ENCODE measurements at regions of chr11 and their contacts with region 1.

Region 1: GRCh38 chr11:34926101-34926830 is 9.8 kb downstream of the PDHX start:
- DNase-seq: peak in 4 of 14 experiments; percentile 27 to 76 (median 66)
- ATAC-seq: peak; percentile 62
- H3K4me3 ChIP-seq: no peak overlapping the region
- H3K4me3 Mint-ChIP-seq: no peak overlapping the region
- H3K27ac ChIP-seq: no peak overlapping the region
- H3K27ac Mint-ChIP-seq: no peak overlapping the region
- H3K4me1 ChIP-seq: no peaks in the 10 kb centered on the region
- H3K4me1 Mint-ChIP-seq: peaks cover 36% of the 10 kb centered on the region
- H3K27me3 ChIP-seq: no peaks in the 10 kb centered on the region
- H3K27me3 Mint-ChIP-seq: no peaks in the 10 kb centered on the region
- CTCF ChIP-seq: peak; percentile 94

Region 2: DNA sequence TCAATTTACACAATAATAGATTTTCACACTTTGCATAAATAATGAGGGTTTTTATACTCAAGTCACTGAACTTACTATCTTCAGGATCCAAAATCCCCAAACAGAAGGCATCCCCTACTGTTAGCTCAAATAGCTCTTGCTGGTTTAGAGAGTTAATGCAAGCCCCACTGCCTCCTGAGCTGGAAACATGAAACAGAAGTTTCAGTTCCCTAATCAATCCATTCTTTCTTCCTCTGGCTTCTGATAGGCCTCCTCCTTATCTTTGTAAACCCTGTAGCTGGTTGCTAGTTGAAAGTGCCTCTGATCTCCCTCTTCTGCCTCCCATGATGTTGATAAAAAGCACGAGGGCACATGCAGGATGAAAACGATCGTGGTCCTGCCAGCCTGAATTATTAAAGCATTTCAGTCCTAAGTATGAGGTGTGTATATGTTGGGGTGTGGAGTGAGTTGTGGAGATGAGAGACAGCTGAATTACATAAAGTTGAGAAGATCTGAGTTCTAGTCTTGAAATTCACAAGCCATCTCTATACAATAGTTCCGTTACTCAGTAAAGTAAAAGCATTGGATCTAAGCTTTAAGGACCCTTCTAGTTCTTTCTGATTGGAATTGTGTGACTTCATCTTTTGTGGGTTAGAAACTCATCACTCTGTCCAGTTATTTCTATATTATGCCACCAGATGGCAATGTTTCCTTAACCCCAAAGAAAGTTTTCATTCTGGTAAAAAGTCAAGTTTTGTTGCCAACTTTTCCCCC is 340.4 kb before region 1 on chr11:
- CTCF ChIA-PET with region 1: no interaction called
- POLR2A ChIA-PET with region 1: no interaction called
- intact Hi-C with region 1: loop called in 1 of 2 experiments (anchors 2 kb)
- DNase-seq: peak in 3 of 14 experiments; percentile 43 to 60 (median 59)
- ATAC-seq: peak; percentile 37
- H3K4me3 ChIP-seq: no peak overlapping the region
- H3K4me3 Mint-ChIP-seq: no peak overlapping the region
- H3K27ac ChIP-seq: no peak overlapping the region
- H3K27ac Mint-ChIP-seq: no peak overlapping the region
- H3K4me1 ChIP-seq: no peaks in the 10 kb centered on the region
- H3K4me1 Mint-ChIP-seq: no peaks in the 10 kb centered on the region
- H3K27me3 ChIP-seq: peaks cover 0 to 3% of the 10 kb centered on the region in 2 experiments
- H3K27me3 Mint-ChIP-seq: peaks cover 28% of the 10 kb centered on the region
- CTCF ChIP-seq: peak; percentile 71

Region 3: GRCh38 chr11:34970480-34970879 is 44.2 kb after region 1 on chr11:
- CTCF ChIA-PET with region 1: no interaction called
- POLR2A ChIA-PET with region 1: no interaction called
- intact Hi-C with region 1: no loop called
- DNase-seq: no peak
- ATAC-seq: no peak
- H3K4me3 ChIP-seq: no peak overlapping the region
- H3K4me3 Mint-ChIP-seq: no peak overlapping the region
- H3K27ac ChIP-seq: no peak overlapping the region
- H3K27ac Mint-ChIP-seq: no peak overlapping the region
- H3K4me1 ChIP-seq: no peaks in the 10 kb centered on the region
- H3K4me1 Mint-ChIP-seq: peaks cover 4% of the 10 kb centered on the region
- H3K27me3 ChIP-seq: no peaks in the 10 kb centered on the region
- H3K27me3 Mint-ChIP-seq: no peaks in the 10 kb centered on the region
- CTCF ChIP-seq: no peak

Region 4: GRCh38 chr11:35144136-35144741 is 218.0 kb after region 1 on chr11:
- CTCF ChIA-PET with region 1: no interaction called
- POLR2A ChIA-PET with region 1: no interaction called
- intact Hi-C with region 1: loop called in 1 of 2 experiments (anchors 10 kb)
- DNase-seq: peak in 13 of 14 experiments; percentile 46 to 88 (median 61)
- ATAC-seq: peak; percentile 64
- H3K4me3 ChIP-seq: peak overlapping the region; percentile 88
- H3K4me3 Mint-ChIP-seq: peak overlapping the region; percentile 84
- H3K27ac ChIP-seq: peak overlapping the region; percentile 73 to 81
- H3K27ac Mint-ChIP-seq: peak overlapping the region; percentile 96
- H3K4me1 ChIP-seq: peaks cover 82% of the 10 kb centered on the region
- H3K4me1 Mint-ChIP-seq: peaks cover 83% of the 10 kb centered on the region
- H3K27me3 ChIP-seq: no peaks in the 10 kb centered on the region
- H3K27me3 Mint-ChIP-seq: no peaks in the 10 kb centered on the region
- CTCF ChIP-seq: no peak

Region 5: DNA sequence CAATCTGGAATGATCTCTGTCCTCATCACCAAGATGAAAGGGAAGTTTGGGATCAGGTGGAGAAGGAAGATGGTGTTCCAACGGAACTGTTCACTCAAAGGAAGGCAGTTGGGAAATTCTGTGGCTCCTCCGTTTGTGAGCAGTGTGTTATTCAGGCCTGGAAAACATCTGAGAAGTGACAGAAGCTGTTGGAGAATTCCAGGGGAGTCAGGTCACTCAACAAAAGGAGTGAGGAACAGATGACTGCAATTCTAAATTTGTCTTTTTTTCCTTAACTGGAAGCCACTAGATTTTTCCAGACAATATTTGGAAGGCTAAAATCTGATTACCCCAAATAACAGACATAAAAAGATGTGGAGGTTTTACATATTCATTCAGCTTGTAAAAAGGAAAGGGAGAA is 320.5 kb after region 1 on chr11:
- CTCF ChIA-PET with region 1: no interaction called
- POLR2A ChIA-PET with region 1: interaction called, 3 read pairs
- intact Hi-C with region 1: loop called in 1 of 2 experiments (anchors 5 kb)
- DNase-seq: peak in 1 of 14 experiments; percentile 2
- ATAC-seq: no peak
- H3K4me3 ChIP-seq: no peak overlapping the region
- H3K4me3 Mint-ChIP-seq: peak overlapping the region; percentile 73
- H3K27ac ChIP-seq: peak overlapping the region; percentile 53 to 62
- H3K27ac Mint-ChIP-seq: peak overlapping the region; percentile 97
- H3K4me1 ChIP-seq: peaks cover 53% of the 10 kb centered on the region
- H3K4me1 Mint-ChIP-seq: peaks cover 61% of the 10 kb centered on the region
- H3K27me3 ChIP-seq: no peaks in the 10 kb centered on the region
- H3K27me3 Mint-ChIP-seq: no peaks in the 10 kb centered on the region
- CTCF ChIP-seq: no peak

Region 6: DNA sequence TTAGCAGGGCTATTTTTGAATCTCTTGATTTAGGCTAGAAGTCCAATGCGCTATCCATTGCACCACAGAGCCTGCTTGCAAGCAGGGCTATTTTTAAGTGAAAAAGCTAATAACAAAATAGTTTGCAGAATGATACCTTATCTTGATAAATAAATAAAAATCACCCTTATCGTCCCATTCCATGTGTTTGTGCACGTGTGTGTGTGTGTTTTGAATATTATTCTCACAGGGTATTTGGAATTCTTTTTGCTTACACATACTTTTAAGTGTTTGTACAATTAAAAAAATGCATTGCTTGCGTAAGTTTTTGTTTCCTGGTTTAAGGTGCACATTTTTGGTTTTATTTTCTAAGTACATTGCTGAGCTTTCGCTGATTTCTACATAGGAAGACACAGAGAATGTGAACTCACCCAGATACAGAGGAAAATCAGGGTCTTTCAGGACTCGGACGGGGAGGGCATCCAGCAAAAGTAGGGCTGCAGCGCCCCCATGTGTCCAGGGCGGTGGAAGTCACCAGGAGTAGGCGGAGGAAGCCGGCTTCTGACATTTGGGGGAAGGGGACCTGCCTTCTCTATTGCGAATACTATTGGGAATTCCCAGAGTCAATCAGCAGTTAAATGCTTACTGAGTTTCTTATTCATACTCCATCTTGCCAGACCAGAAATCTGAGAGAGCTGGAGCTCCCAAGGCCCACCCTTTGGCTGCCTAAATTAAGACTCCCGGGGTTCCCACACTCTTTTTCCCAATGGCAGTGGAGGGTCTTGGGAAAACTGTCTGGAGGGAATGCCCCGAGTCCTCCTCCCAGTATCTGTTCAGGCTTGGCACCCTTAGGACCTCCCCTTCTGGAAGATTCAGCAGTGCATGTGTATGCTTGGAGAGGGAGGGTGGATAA is 465.9 kb after region 1 on chr11:
- CTCF ChIA-PET with region 1: interaction called, 13 read pairs
- POLR2A ChIA-PET with region 1: interaction called, 8 read pairs
- intact Hi-C with region 1: loop called (anchors 1 kb)
- DNase-seq: peak; percentile 72 to 94 (median 86)
- ATAC-seq: peak; percentile 79
- H3K4me3 ChIP-seq: no peak overlapping the region
- H3K4me3 Mint-ChIP-seq: peak overlapping the region; percentile 75
- H3K27ac ChIP-seq: no peak overlapping the region
- H3K27ac Mint-ChIP-seq: no peak overlapping the region
- H3K4me1 ChIP-seq: peaks cover 19% of the 10 kb centered on the region
- H3K4me1 Mint-ChIP-seq: peaks cover 26% of the 10 kb centered on the region
- H3K27me3 ChIP-seq: no peaks in the 10 kb centered on the region
- H3K27me3 Mint-ChIP-seq: no peaks in the 10 kb centered on the region
- CTCF ChIP-seq: peak; percentile 93

Region 7: DNA sequence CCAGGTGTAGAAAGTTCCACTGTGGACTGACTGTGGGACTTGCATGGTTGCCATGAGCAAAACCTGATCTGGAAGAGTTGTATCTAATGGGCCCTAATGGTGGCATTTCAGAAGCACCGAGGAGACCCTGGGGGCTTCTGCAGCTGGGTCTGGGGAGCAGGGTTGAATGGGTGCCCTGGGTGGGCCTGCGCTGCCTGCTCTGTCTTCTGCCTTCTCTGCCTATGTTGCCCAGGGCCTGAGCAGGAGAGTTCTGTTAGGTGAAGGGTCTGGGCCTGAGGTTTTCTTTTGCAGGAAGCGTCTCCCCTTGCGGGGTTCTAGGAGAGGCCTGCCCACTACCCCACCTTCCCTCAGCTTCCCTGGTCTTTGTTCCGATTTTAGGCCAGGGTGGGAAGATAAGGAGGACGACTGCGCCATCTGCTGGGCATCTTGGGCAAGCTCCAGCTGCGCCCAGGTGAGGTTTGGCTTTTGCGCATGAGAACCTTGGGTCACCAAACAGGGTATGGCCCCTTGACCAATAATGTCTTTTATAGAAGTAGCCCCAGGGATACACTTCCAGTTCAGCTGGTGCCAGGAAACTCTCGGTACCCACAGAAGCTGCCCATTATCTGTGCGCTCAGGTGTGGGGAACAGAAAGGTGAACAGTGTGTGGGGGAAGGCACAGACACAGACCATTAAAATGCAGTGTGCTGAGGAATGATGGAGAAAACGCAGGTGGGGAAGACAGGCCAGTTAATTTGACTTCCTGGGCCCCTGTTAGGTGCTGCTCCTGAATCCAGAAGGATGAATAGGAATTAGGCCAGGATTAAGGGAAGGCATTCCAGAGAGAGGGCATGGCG is 1339.7 kb after region 1 on chr11:
- CTCF ChIA-PET with region 1: no interaction called
- POLR2A ChIA-PET with region 1: no interaction called
- intact Hi-C with region 1: loop called in 1 of 2 experiments (anchors 10 kb)
- DNase-seq: peak; percentile 19 to 74 (median 44)
- ATAC-seq: peak; percentile 58
- H3K4me3 ChIP-seq: no peak overlapping the region
- H3K4me3 Mint-ChIP-seq: no peak overlapping the region
- H3K27ac ChIP-seq: no peak overlapping the region
- H3K27ac Mint-ChIP-seq: no peak overlapping the region
- H3K4me1 ChIP-seq: peaks cover 2% of the 10 kb centered on the region
- H3K4me1 Mint-ChIP-seq: no peaks in the 10 kb centered on the region
- H3K27me3 ChIP-seq: no peaks in the 10 kb centered on the region
- H3K27me3 Mint-ChIP-seq: peaks cover 19% of the 10 kb centered on the region
- CTCF ChIP-seq: peak; percentile 79

Measured in CD4-positive, alpha-beta T cell (primary cell).